Activated naive CD4-positive, alpha-beta T cell treated with anti-CD3 and anti-CD28 coated beads for 36 hours (primary cell): ENCODE measurements at regions of chr12 and their contacts with region 1.

Region 1: DNA sequence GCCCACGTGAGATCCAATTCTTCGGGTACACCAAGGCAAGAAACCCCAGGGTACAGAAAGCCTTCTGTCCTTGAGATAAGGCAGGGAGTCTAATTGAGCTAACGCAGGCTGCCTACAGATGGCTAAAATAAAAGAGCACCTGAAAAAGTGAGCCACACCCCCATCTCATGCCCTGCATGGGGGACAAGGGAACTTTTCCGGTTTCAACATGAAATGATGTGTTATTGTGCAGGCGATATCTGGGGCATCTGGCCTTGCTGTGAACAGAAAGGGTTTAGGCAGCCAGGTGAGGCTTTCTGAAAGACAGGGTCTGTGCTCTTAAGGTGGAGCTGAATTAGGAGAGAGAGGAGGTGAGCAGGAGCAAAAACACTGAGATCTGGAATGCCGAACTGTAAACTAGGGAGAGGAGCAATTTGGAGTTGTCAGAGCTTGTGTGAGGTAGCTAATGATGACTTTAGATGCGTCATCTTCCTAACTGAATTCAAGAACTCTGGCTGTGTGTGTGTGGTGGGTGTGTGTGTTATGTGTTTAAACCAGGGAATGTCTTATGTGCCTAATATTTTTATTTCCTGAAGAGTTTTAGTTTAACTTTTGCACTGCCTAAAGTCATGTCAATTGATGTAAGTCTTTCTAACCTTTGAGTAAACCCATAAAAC is 20.1 kb upstream of the LDHB start:
- DNase-seq: peak; percentile 28
- H3K4me3 Mint-ChIP-seq: peak overlapping the region; percentile 3
- H3K27ac Mint-ChIP-seq: peak overlapping the region; percentile 70
- H3K4me1 Mint-ChIP-seq: peaks cover 47% of the 10 kb centered on the region
- H3K27me3 Mint-ChIP-seq: no peaks in the 10 kb centered on the region

Region 2: DNA sequence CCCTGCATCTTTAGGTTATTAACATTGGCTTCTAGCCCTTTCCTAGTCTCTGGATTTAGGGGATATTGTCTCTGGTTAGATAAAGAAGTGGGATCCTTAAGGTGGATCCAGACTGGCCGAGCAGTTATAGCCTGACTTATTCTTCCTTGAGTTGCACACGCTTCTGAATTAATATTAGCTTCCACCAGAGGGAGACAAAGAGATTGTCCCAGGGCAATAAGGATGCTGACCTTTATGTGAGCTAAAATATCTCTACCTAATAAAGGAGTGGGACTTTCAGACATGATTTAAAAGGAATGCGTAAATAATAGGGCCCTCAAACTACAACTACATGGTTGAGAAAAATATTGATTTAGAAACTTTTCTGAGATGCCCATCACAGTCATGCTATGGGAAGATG is 727.5 kb before region 1 on chr12:
- CTCF ChIA-PET with region 1: no interaction called
- intact Hi-C with region 1: loop called (anchors 2 kb)
- DNase-seq: no peak
- H3K4me3 Mint-ChIP-seq: no peak overlapping the region
- H3K27ac Mint-ChIP-seq: no peak overlapping the region
- H3K4me1 Mint-ChIP-seq: no peaks in the 10 kb centered on the region
- H3K27me3 Mint-ChIP-seq: no peaks in the 10 kb centered on the region

Region 3: DNA sequence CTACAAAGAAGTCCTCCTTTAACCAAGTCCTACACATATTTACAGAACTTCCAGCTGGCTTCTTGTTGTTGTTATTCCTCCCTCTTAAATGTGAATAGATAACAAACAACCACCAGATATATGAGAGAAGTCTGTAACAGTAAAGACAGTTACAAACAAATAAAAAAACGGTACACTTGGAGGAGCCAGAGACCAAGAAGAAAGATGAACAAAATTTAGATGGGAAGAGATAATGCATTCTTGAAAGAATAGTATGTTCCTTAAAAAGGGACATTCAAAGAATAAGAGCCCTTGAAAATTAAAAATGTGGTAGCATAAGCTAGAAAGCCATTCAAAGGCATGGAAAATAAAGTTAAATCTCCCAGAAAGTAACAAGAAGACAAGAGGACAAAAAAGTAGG is 369.0 kb before region 1 on chr12:
- CTCF ChIA-PET with region 1: interaction called, 8 read pairs
- intact Hi-C with region 1: loop called (anchors 1 kb)
- DNase-seq: no peak
- H3K4me3 Mint-ChIP-seq: no peak overlapping the region
- H3K27ac Mint-ChIP-seq: no peak overlapping the region
- H3K4me1 Mint-ChIP-seq: no peaks in the 10 kb centered on the region
- H3K27me3 Mint-ChIP-seq: peaks cover 2% of the 10 kb centered on the region

Region 4: DNA sequence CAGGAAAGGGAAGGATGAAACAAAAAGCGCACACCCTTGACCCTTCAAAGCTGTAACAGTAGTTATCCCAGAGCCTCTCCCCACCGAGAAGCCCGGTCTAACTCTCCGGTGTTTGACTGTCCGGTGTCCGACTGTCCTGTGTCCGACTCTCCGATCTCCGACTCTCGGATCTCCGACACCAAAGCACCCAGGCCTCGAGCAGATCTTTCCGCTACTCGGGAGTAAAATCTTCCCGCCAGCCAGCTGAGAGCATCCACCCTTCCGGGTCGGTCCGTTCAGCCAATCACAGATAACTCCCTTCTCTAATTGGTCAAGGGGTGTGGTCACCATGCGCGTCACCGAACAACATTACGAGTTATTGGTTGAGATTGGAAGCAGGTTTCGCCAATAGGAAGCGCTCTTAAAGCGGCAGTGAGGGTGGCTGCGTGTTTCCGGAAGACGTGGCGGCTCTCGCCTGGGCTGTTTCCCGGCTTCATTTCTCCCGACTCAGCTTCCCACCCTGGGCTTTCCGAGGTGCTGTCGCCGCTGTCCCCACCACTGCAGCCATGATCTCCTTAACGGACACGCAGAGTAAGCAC is 176.3 kb before region 1 on chr12 and contains the starts of genes GOLT1B and RECQL:
- CTCF ChIA-PET with region 1: interaction called, 9 read pairs
- intact Hi-C with region 1: loop called (anchors 1 kb)
- DNase-seq: peak; percentile 95
- H3K4me3 Mint-ChIP-seq: no peak within 1 kb of the TSS
- H3K27ac Mint-ChIP-seq: no peak within 1 kb of the TSS
- H3K4me1 Mint-ChIP-seq: peaks cover 44% of the 10 kb centered on the region
- H3K27me3 Mint-ChIP-seq: no peaks in the 10 kb centered on the region
- total RNA-seq, gene GOLT1B: 36.2 to 36.8 TPM
- total RNA-seq, gene RECQL: 89.8 to 93.7 TPM

Region 5: DNA sequence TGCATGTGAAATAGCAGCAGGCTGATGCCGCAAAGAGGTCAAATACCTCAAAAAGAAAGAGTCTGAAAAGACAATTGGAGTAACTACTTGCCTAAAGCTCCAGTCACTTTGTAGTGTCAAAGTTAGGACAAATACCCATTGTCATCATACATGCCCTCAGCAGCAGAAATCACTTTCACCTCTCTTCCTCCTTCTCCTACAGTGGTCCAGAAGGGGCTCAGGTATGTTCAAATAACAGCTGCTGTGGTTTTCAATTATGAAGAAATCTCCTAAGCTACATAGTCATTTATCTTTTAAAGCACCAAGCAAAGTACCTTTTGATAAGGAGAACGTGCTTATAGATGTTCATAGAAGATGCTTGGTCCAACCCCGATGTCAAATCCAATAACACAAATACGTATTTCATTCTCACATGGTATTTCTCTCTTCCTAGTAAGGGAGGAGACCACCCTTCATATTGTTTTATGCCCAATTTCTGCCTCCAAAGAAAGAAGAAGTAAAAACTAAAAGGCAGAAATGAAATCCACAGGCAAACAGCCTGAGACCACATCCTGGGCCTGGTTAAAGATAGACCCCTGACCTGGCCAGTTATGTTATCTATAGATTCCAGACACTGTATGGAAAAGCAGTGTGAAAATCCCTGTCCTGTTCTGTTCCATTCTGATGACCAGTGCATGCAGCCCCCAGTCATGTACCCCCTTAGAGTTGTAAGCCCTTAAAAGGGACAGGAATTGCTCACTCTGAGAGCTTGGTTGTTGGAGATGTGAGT is 96.8 kb before region 1 on chr12:
- CTCF ChIA-PET with region 1: no interaction called
- intact Hi-C with region 1: no loop called
- DNase-seq: no peak
- H3K4me3 Mint-ChIP-seq: no peak overlapping the region
- H3K27ac Mint-ChIP-seq: no peak overlapping the region
- H3K4me1 Mint-ChIP-seq: no peaks in the 10 kb centered on the region
- H3K27me3 Mint-ChIP-seq: no peaks in the 10 kb centered on the region

Region 6: DNA sequence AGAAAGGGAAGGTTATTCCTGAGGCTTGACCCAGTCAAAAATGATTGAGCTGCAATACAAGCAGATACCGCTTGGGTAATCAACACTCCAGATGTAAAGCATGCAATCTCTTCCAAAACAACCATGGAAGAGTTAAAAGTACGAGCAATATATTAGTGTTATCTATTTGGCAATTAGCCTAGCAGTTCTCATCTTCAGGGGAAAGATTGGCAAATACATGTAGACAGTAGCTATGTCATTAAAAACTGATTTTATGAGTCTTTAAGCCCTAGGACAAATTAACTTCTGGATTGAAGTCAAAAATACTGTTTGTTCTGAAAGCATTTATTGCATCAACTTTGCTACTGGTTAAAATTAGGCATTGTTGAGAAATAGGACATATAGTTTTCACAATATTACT is 63.8 kb before region 1 on chr12:
- CTCF ChIA-PET with region 1: interaction called, 11 read pairs
- intact Hi-C with region 1: loop called (anchors 1 kb)
- DNase-seq: no peak
- H3K4me3 Mint-ChIP-seq: no peak overlapping the region
- H3K27ac Mint-ChIP-seq: peak overlapping the region; percentile 85
- H3K4me1 Mint-ChIP-seq: peaks cover 49% of the 10 kb centered on the region
- H3K27me3 Mint-ChIP-seq: no peaks in the 10 kb centered on the region

Region 7: GRCh38 chr12:21657326-21658077 is 20.2 kb before region 1 on chr12 and contains the start of gene LDHB:
- CTCF ChIA-PET with region 1: interaction called, 28 read pairs
- intact Hi-C with region 1: loop called (anchors 1 kb)
- DNase-seq: peak; percentile 98
- H3K4me3 Mint-ChIP-seq: peak within 1 kb of the TSS; percentile 98
- H3K27ac Mint-ChIP-seq: peak within 1 kb of the TSS; percentile 98
- H3K4me1 Mint-ChIP-seq: peaks cover 59% of the 10 kb centered on the region
- H3K27me3 Mint-ChIP-seq: no peaks in the 10 kb centered on the region
- total RNA-seq, gene LDHB: 2,296 to 2,461 TPM

Region 8: DNA sequence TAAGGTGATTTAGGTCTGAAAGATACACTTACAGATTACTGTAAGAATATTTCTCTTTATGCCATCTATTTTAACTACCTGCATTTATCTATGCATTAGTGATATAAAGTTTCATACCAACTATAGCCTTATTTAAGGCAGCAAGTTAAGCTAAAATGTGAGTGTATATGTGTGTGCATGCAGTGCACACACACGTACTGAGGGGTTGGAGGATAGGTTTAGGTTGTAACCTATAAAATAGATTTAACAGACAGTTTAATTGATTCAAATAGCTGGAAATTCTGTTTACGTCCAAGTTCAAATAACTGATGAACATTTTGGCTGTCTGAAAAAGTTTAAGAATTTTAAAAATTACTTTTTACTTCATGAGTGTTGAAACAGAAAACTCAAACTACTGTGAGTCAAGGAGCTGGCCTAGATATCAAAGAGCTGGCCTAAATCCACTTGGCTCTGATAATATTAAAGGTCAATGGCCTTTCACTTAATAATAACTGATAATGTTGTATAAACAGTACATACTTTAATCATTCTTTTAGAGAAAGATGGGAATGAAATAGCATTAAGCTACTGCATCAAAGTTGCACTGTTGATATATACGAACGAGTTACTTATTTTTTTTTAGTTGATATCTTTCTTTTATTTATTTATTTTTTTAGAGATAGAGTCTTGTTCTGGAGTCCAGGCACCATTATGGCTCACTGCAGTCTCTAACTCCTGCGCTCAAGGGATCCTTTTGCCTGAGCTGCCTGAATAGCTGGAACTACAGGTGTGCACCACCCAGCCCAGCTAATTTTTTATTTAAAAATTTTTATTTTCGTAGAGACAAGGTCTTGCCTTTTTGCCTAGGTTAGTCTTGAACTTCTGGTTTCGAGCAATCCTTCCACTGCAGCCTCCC is 110.6 kb after region 1 on chr12:
- CTCF ChIA-PET with region 1: no interaction called
- intact Hi-C with region 1: no loop called
- DNase-seq: no peak
- H3K4me3 Mint-ChIP-seq: no peak overlapping the region
- H3K27ac Mint-ChIP-seq: no peak overlapping the region
- H3K4me1 Mint-ChIP-seq: no peaks in the 10 kb centered on the region
- H3K27me3 Mint-ChIP-seq: peaks cover 10% of the 10 kb centered on the region